Cardiac septum (tissue), 1 donor: ENCODE measurements at regions of chr17 and their contacts with region 1.

Region 1: DNA sequence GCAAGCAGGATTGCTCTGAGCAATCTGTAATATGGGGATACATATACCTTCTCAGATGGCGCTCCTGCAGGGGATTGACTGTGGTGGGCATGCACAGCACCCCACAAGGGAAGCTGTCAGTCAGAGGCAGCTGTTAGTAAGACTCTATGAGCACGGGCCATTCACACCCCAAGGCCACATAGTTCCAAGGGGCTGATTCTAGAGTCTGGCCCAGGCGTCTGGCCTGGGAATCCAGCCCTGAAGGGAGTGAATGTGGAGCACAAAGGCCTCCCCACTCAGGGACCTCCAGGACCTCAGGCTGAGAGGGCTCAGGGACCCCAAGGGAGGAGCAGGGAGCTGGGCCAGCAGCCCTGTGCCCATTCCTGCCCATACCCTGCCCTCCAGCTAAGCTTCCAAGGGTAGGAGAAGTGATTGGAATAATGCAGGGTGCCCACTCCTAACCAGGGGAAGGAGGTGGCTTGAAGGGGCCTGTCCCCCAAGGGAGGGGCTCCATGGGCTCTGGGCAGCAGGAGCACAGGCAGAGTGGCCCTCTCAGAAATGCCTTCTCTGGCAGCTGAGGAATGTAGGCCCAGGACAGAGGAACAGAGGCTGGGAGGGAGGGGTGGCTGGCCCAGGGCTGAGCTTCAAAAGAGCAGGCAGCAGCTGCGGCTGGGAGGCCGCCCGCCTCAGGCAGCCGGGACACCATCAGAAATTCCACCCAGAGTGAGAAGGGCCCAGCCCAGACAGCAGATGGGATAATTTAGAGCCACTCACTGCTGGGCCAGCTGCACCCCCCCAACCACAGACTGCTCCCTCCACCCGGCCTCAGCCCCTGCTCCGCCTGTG is 48.9 kb upstream of the MRPS23 start:
- DNase-seq: peak; percentile 86

Region 2: DNA sequence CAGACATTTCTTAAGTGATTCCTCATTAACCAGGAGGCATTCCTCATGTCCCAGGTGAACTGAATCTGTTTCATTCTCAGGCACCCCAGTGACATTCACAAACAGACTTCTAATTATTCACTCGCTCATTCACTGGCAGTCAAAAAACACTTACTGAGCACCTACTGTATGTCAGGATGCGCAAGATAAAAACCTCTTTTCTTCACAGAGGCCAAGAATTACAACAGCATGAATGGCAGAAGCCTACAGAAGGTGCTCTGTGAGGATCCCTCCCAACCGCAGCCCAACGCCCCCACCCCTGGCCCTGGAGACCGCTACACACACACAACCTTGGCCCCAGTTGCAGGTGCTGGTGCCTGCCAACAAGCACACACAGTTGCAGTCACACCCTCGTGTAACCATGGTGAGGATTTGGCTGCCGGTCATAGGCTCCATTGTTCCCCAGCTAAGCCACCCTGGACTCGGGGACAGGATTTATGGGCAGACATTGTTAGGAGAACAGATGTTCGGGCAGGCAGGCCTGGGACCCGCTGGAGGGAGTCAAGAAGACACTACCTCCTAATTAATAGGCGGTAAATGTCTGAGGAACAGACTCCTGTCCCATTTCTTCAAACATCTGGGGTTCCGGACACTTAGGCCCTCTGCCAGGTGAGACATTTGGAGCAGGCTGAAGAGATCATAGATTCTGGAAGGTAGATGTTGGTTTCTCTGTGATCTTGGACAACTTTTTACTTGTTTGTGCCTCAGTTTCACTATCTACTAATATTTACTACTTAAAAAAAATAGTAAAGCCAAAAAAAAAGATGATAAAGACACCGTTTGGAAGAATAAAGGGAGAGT is 13.4 kb after region 1 on chr17:
- intact Hi-C with region 1: no loop called
- DNase-seq: peak; percentile 93

Region 3: DNA sequence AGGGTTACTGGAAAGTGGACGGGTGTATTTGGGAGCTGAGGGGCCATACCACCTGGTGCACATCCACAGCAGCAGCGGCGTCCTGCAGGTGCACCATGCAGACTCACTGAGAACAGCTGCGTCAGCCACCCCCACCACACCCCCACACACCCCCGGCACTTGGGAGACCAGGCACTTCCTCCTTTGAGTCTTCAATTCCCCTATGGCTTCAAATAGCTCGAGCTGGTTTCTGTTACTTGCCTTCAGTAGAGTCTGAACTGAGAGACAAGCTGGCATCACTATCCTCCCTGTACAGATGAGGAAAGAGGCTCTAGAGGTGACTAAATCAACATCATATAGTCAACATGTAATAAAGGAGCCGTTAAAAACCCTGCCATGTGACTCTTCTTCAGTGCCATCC is 41.1 kb after region 1 on chr17:
- intact Hi-C with region 1: loop called (anchors 5 kb)
- DNase-seq: no peak